ENCODE measurements at regions of chr12 and their contacts with region 1.

Region 1: GRCh38 chr12:106760184-106760531 is 14.3 kb upstream of the RIC8B start:
- DNase-seq: no peak
- H3K4me3 ChIP-seq: no peak overlapping the region
- H3K27ac ChIP-seq: no peak overlapping the region
- H3K4me1 ChIP-seq: peaks cover 5% of the 10 kb centered on the region
- H3K27me3 ChIP-seq: no peaks in the 10 kb centered on the region
- CTCF ChIP-seq: no peak
- EP300 ChIP-seq: no peak
- POLR2A ChIP-seq: no peak

Region 2: GRCh38 chr12:106417926-106418910 is 341.9 kb before region 1 on chr12:
- intact Hi-C with region 1: loop called in 1 of 4 experiments (anchors 10 kb)
- DNase-seq: peak in 1 of 5 donors; percentile 16
- H3K4me3 ChIP-seq: no peak overlapping the region
- H3K27ac ChIP-seq: peak overlapping the region; percentile 25 to 42
- H3K4me1 ChIP-seq: peaks cover 3% of the 10 kb centered on the region
- H3K27me3 ChIP-seq: no peaks in the 10 kb centered on the region
- CTCF ChIP-seq: no peak
- EP300 ChIP-seq: no peak
- POLR2A ChIP-seq: no peak

Measured in ovary (tissue), 10 donors.